Adrenal gland (tissue), 19 donors: ENCODE measurements at regions of chr3 and their contacts with region 1.

Region 1: DNA sequence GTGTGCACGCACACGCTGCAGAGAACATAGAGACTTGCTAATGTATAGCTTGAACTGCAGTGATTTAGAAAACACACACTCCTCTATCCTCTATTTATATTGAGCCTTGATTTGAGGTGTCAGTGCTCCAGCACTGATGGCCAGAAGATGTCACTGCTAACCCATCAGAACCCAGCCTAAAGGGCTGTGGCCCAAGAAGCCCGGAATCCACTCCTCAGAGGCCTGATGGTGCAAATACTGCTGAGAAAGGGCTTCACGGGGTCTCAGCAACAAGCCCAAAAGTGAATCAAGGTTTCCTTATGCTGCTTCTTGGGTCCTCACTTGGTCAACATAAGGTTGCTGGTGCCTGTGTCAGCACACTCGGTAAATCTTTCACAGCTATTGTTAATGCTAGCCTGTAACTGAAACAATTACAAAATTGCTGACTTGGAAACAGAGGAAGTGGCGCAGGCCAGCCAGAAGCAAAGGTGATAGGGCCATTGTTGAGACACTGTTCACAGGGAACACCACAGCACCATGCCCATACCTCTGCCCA is 60.3 kb downstream of the HEG1 start:
- DNase-seq: peak; percentile 53 to 81 (median 70)
- H3K4me3 ChIP-seq: no peak overlapping the region
- H3K27ac ChIP-seq: peak overlapping the region in 3 of 5 donors; percentile 13 to 43 (median 27)
- H3K4me1 ChIP-seq: peaks cover 4 to 6% of the 10 kb centered on the region in 2 donors
- H3K27me3 ChIP-seq: no peaks in the 10 kb centered on the region
- CTCF ChIP-seq: peak; percentile 43 to 86 (median 73)
- POLR2A ChIP-seq: no peak

Region 2: GRCh38 chr3:125098611-125099291 is 103.2 kb after region 1 on chr3:
- intact Hi-C with region 1: no loop called
- DNase-seq: no peak
- H3K4me3 ChIP-seq: no peak overlapping the region
- H3K27ac ChIP-seq: no peak overlapping the region
- H3K4me1 ChIP-seq: no peaks in the 10 kb centered on the region
- H3K27me3 ChIP-seq: no peaks in the 10 kb centered on the region
- CTCF ChIP-seq: no peak
- POLR2A ChIP-seq: no peak

Region 3: GRCh38 chr3:125141596-125142419 is 146.3 kb after region 1 on chr3:
- intact Hi-C with region 1: loop called (anchors 10 kb)
- DNase-seq: peak; percentile 52 to 77 (median 66)
- H3K4me3 ChIP-seq: peak overlapping the region in 1 of 4 donors; percentile 39
- H3K27ac ChIP-seq: peak overlapping the region in 3 of 5 donors; percentile 10 to 91 (median 84)
- H3K4me1 ChIP-seq: peaks cover 10 to 56% of the 10 kb centered on the region in 2 donors
- H3K27me3 ChIP-seq: no peaks in the 10 kb centered on the region
- CTCF ChIP-seq: peak in 5 of 6 experiments; percentile 7 to 39 (median 26)
- POLR2A ChIP-seq: no peak

Region 4: GRCh38 chr3:125165189-125165947 is 169.8 kb after region 1 on chr3:
- intact Hi-C with region 1: loop called in 1 of 2 experiments (anchors 10 kb)
- DNase-seq: peak in 5 of 7 donors; percentile 50 to 70 (median 59)
- H3K4me3 ChIP-seq: no peak overlapping the region
- H3K27ac ChIP-seq: no peak overlapping the region
- H3K4me1 ChIP-seq: no peaks in the 10 kb centered on the region
- H3K27me3 ChIP-seq: no peaks in the 10 kb centered on the region
- CTCF ChIP-seq: peak; percentile 47 to 73 (median 61)
- POLR2A ChIP-seq: no peak

Region 5: DNA sequence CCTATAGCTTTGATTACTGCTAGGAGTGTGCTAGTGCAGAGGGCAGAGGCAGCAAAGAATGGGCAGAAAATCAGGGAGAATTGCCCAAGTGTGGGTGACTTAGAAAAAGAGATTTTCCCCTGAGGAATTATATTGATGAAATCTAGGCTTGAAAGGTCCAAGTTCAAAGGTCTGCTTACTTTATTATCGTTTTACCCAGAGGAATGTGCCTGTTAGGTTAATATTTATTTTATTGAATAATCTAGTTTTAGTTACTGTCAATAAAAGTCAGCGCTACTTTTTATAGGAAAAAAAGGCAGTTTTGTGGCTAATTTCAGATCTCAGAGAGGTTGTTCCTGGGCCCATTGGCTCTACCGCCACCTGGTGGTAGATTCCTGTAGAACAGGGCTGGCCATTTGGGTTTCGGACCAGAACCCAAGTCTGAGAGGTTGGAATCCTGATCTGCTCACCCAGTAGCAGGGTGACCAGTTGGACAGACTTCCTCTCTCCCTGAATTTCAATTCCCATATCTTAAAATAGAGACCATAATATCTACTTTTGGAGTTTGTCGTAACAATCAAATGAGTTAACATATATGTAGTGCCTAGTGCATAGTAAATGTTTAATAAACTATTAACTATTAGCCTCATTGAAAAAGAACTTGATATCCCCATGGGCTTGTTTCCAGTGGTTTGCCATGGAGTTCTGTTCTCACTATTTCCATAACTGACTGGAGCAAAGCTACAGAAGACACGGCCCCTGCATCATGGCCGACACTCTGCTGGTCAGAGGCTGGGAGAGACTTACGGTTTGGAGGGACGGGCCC is 442.3 kb after region 1 on chr3:
- intact Hi-C with region 1: loop called (anchors 5 kb)
- DNase-seq: peak; percentile 39 to 80 (median 65)
- H3K4me3 ChIP-seq: no peak overlapping the region
- H3K27ac ChIP-seq: no peak overlapping the region
- H3K4me1 ChIP-seq: no peaks in the 10 kb centered on the region
- H3K27me3 ChIP-seq: no peaks in the 10 kb centered on the region
- CTCF ChIP-seq: peak; percentile 82 to 96 (median 88)
- POLR2A ChIP-seq: no peak

Region 6: DNA sequence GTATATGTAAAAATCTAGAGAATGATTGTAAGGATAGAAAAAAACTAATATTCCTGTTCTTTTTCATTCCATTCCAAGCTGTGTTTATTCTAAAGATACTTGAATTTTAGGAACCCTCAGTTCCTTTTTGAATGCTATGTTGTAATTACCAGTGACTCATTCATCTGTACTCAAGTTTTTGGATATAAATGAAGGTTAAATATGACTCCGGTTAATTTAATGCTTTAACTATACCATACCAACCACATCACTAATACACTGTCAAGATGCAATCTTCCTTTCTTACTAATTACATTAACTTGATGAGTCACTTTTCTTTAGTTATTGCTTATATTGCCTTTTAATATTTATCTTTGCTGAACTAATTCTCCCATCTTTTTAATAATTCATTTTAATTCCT is 448.4 kb after region 1 on chr3:
- intact Hi-C with region 1: loop called (anchors 5 kb)
- DNase-seq: no peak
- H3K4me3 ChIP-seq: no peak overlapping the region
- H3K27ac ChIP-seq: no peak overlapping the region
- H3K4me1 ChIP-seq: no peaks in the 10 kb centered on the region
- H3K27me3 ChIP-seq: no peaks in the 10 kb centered on the region
- CTCF ChIP-seq: no peak
- POLR2A ChIP-seq: no peak